PC-9 (cell line): ENCODE measurements at regions of chr3 and their contacts with region 1.

Region 1: DNA sequence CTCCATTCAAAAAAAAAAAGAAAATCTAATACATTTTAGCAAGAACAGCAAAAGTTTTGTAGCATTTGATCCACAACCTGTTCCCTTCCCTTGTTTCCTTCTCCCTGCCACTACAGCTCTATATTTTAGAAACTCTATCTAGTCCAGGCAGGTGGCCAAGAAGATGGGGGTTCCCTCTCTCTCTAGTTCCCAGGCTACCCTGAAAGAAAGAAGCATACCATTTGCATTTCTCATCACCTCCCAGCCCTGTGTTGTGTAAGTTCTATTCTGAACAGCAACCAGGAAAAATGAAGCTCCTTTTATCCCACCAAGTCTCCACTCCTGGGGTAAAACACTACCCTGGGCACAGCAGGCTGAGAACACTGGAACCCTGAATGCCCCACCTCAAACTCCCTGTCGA is 100.0 kb downstream of the PCCB start:
- DNase-seq: peak; percentile 71 to 77
- H3K4me3 ChIP-seq: no peak overlapping the region
- H3K27ac ChIP-seq: peak overlapping the region; percentile 74
- H3K4me1 ChIP-seq: peaks cover 14% of the 10 kb centered on the region
- H3K27me3 ChIP-seq: no peaks in the 10 kb centered on the region
- CTCF ChIP-seq: no peak

Region 2: DNA sequence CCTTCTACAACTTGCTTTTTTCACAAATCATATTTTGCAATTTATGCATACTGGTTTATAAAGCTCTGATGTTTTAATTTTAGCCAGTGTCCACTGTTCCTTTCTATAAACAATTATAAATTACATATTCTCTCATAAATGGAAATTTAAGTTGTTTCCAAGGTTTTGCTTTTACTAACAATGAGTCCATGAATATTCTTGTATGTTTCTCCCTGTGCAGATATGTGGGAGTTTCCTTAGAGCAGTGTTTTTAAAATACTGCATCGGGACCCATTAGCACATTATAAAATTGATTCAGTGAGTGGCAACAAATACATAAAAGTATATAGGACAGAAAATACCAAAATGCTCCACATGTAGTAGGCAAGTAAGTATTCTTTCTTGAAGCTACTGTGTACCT is 135.6 kb after region 1 on chr3:
- CTCF ChIA-PET with region 1: no interaction called
- POLR2A ChIA-PET with region 1: interaction called, 16 read pairs
- intact Hi-C with region 1: no loop called
- DNase-seq: no peak
- H3K4me3 ChIP-seq: no peak overlapping the region
- H3K27ac ChIP-seq: no peak overlapping the region
- H3K4me1 ChIP-seq: no peaks in the 10 kb centered on the region
- H3K27me3 ChIP-seq: no peaks in the 10 kb centered on the region
- CTCF ChIP-seq: no peak

Region 3: GRCh38 chr3:136505676-136506075 is 155.5 kb after region 1 on chr3:
- CTCF ChIA-PET with region 1: no interaction called
- POLR2A ChIA-PET with region 1: no interaction called
- intact Hi-C with region 1: no loop called
- DNase-seq: no peak
- H3K4me3 ChIP-seq: no peak overlapping the region
- H3K27ac ChIP-seq: no peak overlapping the region
- H3K4me1 ChIP-seq: no peaks in the 10 kb centered on the region
- H3K27me3 ChIP-seq: no peaks in the 10 kb centered on the region
- CTCF ChIP-seq: no peak

Region 4: GRCh38 chr3:136632625-136633081 is 282.5 kb after region 1 on chr3:
- CTCF ChIA-PET with region 1: no interaction called
- POLR2A ChIA-PET with region 1: no interaction called
- intact Hi-C with region 1: loop called (anchors 5 kb)
- DNase-seq: peak in 1 of 2 experiments; percentile 53
- H3K4me3 ChIP-seq: no peak overlapping the region
- H3K27ac ChIP-seq: no peak overlapping the region
- H3K4me1 ChIP-seq: peaks cover 10% of the 10 kb centered on the region
- H3K27me3 ChIP-seq: no peaks in the 10 kb centered on the region
- CTCF ChIP-seq: no peak